ENCODE measurements at regions of chr1 and their contacts with region 1.

Region 1: GRCh38 chr1:32933742-32934322 is 30.8 kb downstream of the RNF19B start:
- DNase-seq: peak; percentile 38 to 84
- ATAC-seq: peak; percentile 71 to 77
- H3K4me3 ChIP-seq: no peak overlapping the region
- H3K27ac ChIP-seq: peak overlapping the region; percentile 77 to 86
- H3K4me1 ChIP-seq: peaks cover 37% of the 10 kb centered on the region
- CTCF ChIP-seq: peak; percentile 13; the same call in 1 of the 3 replicates
- EP300 ChIP-seq: no peak
- POLR2A ChIP-seq: no peak
- RAD21 ChIP-seq: no peak

Region 2: GRCh38 chr1:32953495-32953894 is 19.7 kb after region 1 on chr1:
- CTCF ChIA-PET with region 1: interaction called, 21 read pairs
- POLR2A ChIA-PET with region 1: no interaction called
- DNase-seq: peak in 1 of 2 experiments; percentile 48
- ATAC-seq: peak in 1 of 2 experiments; percentile 59; a peak in 2 of 6 replicates
- H3K4me3 ChIP-seq: no peak overlapping the region
- H3K27ac ChIP-seq: peak overlapping the region in 1 of 2 experiments; percentile 48; a peak in 2 of 6 replicates
- H3K4me1 ChIP-seq: peaks cover 37% of the 10 kb centered on the region
- CTCF ChIP-seq: no peak
- EP300 ChIP-seq: no peak
- POLR2A ChIP-seq: no peak
- RAD21 ChIP-seq: no peak

Region 3: GRCh38 chr1:33001282-33001681 is 67.5 kb after region 1 on chr1:
- CTCF ChIA-PET with region 1: interaction called, 17 read pairs
- POLR2A ChIA-PET with region 1: no interaction called
- DNase-seq: peak in 1 of 2 experiments; percentile 19
- ATAC-seq: peak; percentile 58 to 60; a peak in 3 of 6 replicates
- H3K4me3 ChIP-seq: no peak overlapping the region
- H3K27ac ChIP-seq: no peak overlapping the region
- H3K4me1 ChIP-seq: peaks cover 7% of the 10 kb centered on the region; the same call in 1 of the 3 replicates
- CTCF ChIP-seq: no peak
- EP300 ChIP-seq: no peak
- POLR2A ChIP-seq: no peak
- RAD21 ChIP-seq: no peak

Region 4: GRCh38 chr1:33055210-33056008 is 121.6 kb after region 1 on chr1:
- CTCF ChIA-PET with region 1: interaction called, 97 read pairs
- POLR2A ChIA-PET with region 1: no interaction called
- DNase-seq: peak; percentile 64 to 92
- ATAC-seq: peak; percentile 92 to 97
- H3K4me3 ChIP-seq: no peak overlapping the region
- H3K27ac ChIP-seq: peak overlapping the region; percentile 71 to 78
- H3K4me1 ChIP-seq: peaks cover 13% of the 10 kb centered on the region
- CTCF ChIP-seq: peak; percentile 55
- EP300 ChIP-seq: no peak
- POLR2A ChIP-seq: no peak
- RAD21 ChIP-seq: peak; percentile 57 to 65